ENCODE measurements at regions of chr7 and their contacts with region 1.

Region 1: GRCh38 chr7:141370178-141370577 is 181.0 kb upstream of the AGK start:
- DNase-seq: no peak
- H3K4me3 ChIP-seq: no peak overlapping the region
- CTCF ChIP-seq: no peak

Region 2: GRCh38 chr7:141291541-141291940 is 78.6 kb before region 1 on chr7:
- in situ Hi-C with region 1: no loop called
- DNase-seq: no peak
- H3K4me3 ChIP-seq: no peak overlapping the region
- CTCF ChIP-seq: no peak

Region 3: GRCh38 chr7:141339619-141340018 is 30.6 kb before region 1 on chr7:
- in situ Hi-C with region 1: no loop called
- DNase-seq: no peak
- H3K4me3 ChIP-seq: no peak overlapping the region
- CTCF ChIP-seq: no peak

Region 4: DNA sequence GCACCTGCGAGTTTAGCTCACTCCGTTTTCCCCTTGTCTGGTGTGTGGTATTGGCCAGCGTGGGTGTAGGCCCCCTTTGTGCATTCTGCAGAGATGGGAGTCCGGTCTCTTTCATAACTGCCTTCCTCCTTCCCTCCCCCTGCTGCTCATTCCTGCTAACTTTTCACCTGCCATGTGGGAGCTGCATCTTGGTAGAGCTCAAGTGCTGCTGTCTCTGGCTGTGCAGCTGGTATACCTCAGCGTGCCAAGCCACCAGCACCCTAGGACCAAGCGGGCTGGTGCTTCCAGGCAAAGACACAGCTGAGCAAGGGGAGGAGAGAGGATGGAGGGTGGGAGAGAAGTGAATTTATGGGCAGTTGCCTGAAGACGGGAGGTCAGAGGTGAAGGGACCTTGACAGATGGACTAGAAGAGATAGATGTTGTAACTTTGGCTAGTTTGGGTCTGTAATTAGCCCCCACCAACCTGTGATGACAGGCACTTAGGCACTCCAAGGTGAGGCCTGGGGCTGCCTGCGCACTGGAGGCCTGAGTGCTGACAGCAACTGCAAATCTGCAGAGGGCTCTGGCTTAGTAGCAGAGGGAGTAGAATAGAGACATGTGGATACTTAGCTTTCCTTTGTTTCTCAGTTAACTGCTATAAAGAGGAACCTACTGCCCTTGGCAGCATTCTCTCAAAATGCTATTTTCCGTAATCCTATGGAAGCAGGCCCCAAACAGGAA is 32.3 kb after region 1 on chr7:
- in situ Hi-C with region 1: no loop called
- DNase-seq: no peak
- H3K4me3 ChIP-seq: no peak overlapping the region
- CTCF ChIP-seq: no peak

Region 5: DNA sequence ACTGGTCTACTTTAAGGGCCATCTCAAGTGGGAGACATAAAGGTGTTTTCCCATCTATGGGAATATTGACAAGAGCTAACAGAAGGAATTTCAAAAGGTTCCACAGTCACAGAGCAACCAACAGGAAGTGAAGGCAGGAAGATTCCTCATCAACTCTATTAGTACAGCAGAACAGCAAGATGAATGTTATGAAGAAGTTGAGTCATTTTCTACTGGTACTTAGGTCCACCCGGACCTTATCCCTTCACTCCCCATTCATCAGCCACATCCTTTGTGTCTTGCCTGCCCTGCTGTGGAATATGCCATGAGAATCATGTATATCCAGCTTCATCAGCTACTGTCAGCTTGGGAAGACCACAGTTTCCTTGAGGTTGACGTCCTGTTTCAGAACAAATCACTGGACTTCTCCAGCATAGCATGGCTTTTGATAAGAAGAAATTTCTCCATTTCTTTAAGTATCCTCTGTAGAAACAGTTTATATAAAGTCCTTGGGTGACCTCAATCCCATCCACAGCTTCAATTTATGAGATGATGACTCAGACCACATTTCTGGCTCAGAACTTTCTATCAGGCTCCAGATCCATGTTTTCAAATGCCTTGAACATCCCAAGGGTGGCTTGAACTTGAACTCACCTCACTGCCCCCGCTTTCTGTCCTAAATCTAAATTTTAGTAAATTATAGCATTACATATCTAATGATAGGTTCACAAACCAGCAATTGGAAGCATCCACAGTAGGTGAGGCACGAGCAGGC is 96.2 kb after region 1 on chr7:
- in situ Hi-C with region 1: loop called (anchors 5 kb)
- DNase-seq: no peak
- H3K4me3 ChIP-seq: no peak overlapping the region
- CTCF ChIP-seq: no peak

Region 6: DNA sequence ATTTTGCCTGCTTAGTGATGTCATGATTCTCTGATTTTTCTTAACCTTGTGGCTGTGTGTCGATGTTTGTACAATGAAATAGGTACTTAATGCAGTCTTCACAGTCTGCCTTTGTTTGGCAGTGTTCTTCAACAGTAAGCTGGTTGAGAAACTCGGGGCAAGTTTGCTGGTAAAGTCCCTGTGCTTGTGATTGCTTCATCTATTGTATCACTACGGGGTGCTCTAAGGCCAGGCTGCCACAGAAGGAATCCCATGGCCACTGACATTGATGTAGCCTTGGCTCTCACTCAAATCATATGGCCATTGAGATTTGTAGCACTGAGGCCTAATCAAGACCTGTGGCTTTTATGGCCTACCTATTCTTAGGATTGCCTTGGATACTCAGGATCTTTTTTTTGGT is 504.6 kb after region 1 on chr7:
- in situ Hi-C with region 1: no loop called
- DNase-seq: no peak
- H3K4me3 ChIP-seq: no peak overlapping the region
- CTCF ChIP-seq: no peak

Measured in astrocyte of the cerebellum (primary cell).